ENCODE measurements at regions of chr10 and their contacts with region 1.

Region 1: DNA sequence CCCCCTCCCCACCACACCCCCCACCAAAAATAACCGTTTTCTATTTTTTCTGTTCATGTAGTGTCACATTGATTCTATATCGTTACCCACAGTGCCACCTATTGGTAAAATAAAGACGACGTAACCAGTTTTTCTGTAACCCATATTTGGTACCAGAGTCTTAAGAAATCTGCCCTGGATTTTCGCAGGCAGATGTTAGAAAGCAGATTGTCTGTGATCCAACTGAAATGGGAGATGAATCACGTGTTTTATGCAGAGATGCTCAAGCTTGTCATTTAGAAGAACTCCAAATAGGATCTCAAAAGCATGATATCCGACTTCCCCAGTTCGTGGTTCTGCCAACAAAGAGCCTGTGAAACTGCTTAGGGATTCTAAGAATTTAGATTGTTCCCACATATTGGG is 261.1 kb upstream of the CSTF2T start:
- DNase-seq: peak; percentile 8
- ATAC-seq: peak; percentile 73; the same call in 1 of the 2 replicates
- H3K4me3 ChIP-seq: no peak overlapping the region
- H3K27ac ChIP-seq: no peak overlapping the region
- H3K4me1 ChIP-seq: no peaks in the 10 kb centered on the region
- H3K27me3 ChIP-seq: peaks cover 6% of the 10 kb centered on the region
- CTCF ChIP-seq: peak; percentile 76

Region 2: DNA sequence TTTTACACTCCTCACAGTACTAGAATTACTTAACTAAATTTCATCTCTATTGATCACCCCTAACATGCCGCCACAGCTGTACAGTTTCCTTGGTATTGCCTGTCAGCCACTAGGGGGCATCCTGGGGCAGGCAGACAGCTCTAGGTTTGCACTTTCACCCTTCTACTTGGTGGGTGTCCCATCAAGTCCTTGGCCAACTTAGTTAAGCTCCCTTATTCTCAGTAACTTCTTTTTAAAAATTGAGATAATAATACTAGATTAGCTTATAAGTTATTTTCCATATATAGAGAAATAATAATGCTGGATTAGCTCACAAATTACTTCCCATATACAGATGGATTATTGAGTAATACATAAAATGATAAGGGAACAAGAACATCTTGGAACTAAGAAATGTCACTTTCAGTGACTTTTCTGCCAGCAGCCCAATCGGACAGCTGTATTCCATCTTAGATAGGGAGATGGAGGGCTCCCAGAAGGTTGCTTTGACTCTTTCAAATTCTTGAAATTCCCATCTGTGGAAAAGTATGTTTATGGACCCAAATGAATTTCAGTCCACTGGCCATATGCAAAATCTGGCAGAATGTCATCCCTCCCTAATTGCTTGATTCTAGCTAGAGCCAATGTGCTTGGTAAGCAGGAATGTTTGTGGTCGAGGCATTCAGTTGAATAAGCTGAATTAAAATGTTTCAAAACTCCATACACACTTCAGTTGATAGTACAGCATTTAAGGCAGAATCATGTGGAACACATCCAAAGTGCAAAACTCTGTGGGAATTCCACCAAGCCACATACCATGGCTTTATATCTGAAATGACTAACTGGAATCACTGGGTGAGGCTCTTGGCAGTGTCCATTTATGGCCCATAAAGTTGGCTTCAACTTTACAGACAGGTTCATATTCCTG is 570.8 kb before region 1 on chr10:
- CTCF ChIA-PET with region 1: no interaction called
- POLR2A ChIA-PET with region 1: no interaction called
- in situ Hi-C with region 1: no loop called
- intact Hi-C with region 1: loop called (anchors 5 kb)
- DNase-seq: peak; percentile 28
- ATAC-seq: no peak
- H3K4me3 ChIP-seq: no peak overlapping the region
- H3K27ac ChIP-seq: no peak overlapping the region
- H3K4me1 ChIP-seq: no peaks in the 10 kb centered on the region
- H3K27me3 ChIP-seq: no peaks in the 10 kb centered on the region
- CTCF ChIP-seq: peak; percentile 87

Region 3: GRCh38 chr10:51815723-51816122 is 144.8 kb before region 1 on chr10:
- CTCF ChIA-PET with region 1: no interaction called
- POLR2A ChIA-PET with region 1: no interaction called
- in situ Hi-C with region 1: no loop called
- intact Hi-C with region 1: no loop called
- DNase-seq: no peak
- ATAC-seq: no peak
- H3K4me3 ChIP-seq: no peak overlapping the region
- H3K27ac ChIP-seq: no peak overlapping the region
- H3K4me1 ChIP-seq: no peaks in the 10 kb centered on the region
- H3K27me3 ChIP-seq: peaks cover 2% of the 10 kb centered on the region; the same call in 1 of the 2 replicates
- CTCF ChIP-seq: no peak

Region 4: DNA sequence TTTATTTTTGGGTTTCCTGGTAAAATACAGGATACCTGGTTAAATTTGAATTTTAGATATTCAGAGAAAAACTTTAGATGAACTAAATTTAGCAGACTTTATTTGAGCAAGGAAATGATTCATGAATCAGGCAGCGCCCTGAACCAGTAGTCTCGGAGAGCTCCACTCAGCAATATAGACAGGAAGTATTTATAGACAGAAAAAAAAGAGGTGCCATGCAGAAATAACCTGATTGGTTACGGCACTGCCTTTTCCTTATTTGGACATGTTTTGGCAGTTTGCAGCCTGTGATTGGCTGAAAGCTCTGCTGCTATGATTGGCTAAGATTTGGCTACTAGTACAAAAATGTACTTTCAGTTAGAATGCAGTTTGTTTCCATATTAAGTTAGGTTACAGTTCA is 155.3 kb after region 1 on chr10:
- CTCF ChIA-PET with region 1: no interaction called
- POLR2A ChIA-PET with region 1: no interaction called
- in situ Hi-C with region 1: no loop called
- intact Hi-C with region 1: no loop called
- DNase-seq: no peak
- ATAC-seq: no peak
- H3K4me3 ChIP-seq: no peak overlapping the region
- H3K27ac ChIP-seq: no peak overlapping the region
- H3K4me1 ChIP-seq: no peaks in the 10 kb centered on the region
- H3K27me3 ChIP-seq: no peaks in the 10 kb centered on the region
- CTCF ChIP-seq: no peak